ENCODE measurements at regions of chrX and their contacts with region 1.

Region 1: GRCh38 chrX:19334945-19335626 is 8.6 kb upstream of the PDHA1 start:
- DNase-seq: no peak
- H3K4me3 ChIP-seq: no peak overlapping the region
- H3K27ac ChIP-seq: no peak overlapping the region
- H3K4me1 ChIP-seq: peaks cover 0 to 4% (median 0%) of the 10 kb centered on the region in 4 donors
- H3K27me3 ChIP-seq: no peaks in the 10 kb centered on the region
- CTCF ChIP-seq: peak in 4 of 5 experiments; percentile 15 to 27 (median 20)
- EP300 ChIP-seq: no peak
- POLR2A ChIP-seq: no peak

Region 2: DNA sequence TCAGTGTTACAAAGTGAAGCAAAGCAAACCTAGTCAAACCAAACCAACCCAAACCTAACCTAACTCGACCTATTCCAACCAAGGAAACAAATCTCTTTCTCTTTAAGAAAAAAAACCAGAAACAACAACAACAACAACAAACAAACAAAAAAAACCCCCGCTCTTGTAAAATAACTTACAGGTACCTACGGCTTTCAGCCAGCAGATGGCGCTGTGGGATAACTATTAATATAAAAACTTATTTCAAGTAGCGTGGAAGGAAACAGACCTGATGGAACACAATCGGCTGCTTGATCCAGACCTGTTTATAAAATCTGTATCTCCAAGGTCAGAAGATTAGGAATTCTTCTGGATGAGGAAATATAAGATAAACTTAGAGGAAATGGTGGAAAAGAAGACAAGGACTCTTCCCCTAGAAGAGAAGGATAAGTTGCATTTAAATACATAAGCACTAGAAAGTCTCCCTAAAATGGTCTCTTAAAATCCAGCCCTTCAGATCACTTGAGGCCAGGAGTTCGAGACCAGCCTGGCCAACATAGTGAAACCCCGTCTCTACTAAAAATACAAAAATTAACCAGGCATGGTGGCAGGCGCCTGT is 944.0 kb before region 1 on chrX:
- in situ Hi-C with region 1: loop called (anchors 5 to 25 kb)
- intact Hi-C with region 1: loop called (anchors 10 kb)
- DNase-seq: peak; percentile 67
- H3K4me3 ChIP-seq: no peak overlapping the region
- H3K27ac ChIP-seq: no peak overlapping the region
- H3K4me1 ChIP-seq: no peaks in the 10 kb centered on the region
- H3K27me3 ChIP-seq: no peaks in the 10 kb centered on the region
- CTCF ChIP-seq: peak; percentile 60 to 88 (median 74)
- EP300 ChIP-seq: no peak
- POLR2A ChIP-seq: no peak

Region 3: GRCh38 chrX:18668071-18668835 is 666.8 kb before region 1 on chrX:
- in situ Hi-C with region 1: loop called in 1 of 4 experiments (anchors 10 kb)
- intact Hi-C with region 1: no loop called
- DNase-seq: no peak
- H3K4me3 ChIP-seq: no peak overlapping the region
- H3K27ac ChIP-seq: no peak overlapping the region
- H3K4me1 ChIP-seq: no peaks in the 10 kb centered on the region
- H3K27me3 ChIP-seq: no peaks in the 10 kb centered on the region
- CTCF ChIP-seq: no peak
- EP300 ChIP-seq: no peak
- POLR2A ChIP-seq: no peak

Region 4: GRCh38 chrX:19487520-19488200 is 152.6 kb after region 1 on chrX:
- in situ Hi-C with region 1: no loop called
- intact Hi-C with region 1: no loop called
- DNase-seq: peak; percentile 10
- H3K4me3 ChIP-seq: no peak overlapping the region
- H3K27ac ChIP-seq: no peak overlapping the region
- H3K4me1 ChIP-seq: no peaks in the 10 kb centered on the region
- H3K27me3 ChIP-seq: no peaks in the 10 kb centered on the region
- CTCF ChIP-seq: no peak
- EP300 ChIP-seq: no peak
- POLR2A ChIP-seq: no peak

Measured in transverse colon (tissue), 4 donors.